Aorta (tissue), 5 donors: ENCODE measurements at regions of chr10 and their contacts with region 1.

Region 1: DNA sequence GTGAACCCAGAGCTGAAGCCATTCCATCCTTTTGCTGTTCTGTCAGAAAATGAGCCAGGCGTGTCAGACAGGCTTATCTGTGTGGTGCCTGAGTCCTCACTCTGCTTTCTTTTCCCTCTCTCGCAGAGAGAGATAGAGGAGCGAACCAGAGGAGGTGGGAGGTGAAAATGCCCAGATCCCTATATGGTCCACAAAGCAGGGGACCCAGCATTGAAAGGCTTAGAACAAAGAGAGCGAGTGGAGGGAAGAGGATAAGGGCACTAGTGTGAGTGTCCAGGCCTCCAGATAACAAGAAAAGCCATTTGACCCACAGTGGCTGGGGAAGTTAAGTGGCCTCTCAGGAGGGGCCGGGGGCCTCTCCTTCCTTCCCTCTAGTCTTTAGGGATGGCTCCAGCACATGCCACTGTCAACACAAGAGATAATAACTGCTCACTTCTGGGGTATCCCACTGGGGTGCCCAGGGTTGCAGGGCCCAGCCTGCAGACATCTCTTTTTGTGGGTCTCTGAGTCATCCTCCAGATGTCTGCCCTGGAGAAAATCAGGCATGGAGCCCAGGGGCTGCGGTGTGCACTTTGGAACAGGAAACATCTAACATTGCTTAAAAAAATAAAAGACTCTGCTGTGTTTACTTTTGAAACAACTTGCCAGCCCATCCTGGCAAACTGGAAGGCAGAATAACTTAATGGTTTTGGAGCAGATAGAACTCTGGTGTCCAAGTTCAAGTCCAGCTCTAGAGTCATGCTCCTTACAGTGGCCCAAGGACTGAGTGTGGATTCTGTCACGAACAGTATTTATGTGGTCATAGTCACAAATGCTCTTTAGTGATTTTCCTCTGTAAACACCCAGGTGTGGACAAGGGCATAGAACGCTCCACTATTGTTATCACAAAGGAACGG is 189.5 kb downstream of the CXCL12 start:
- DNase-seq: peak; percentile 87 to 90
- ATAC-seq: peak; percentile 82
- H3K4me3 ChIP-seq: no peak overlapping the region
- H3K27ac ChIP-seq: peak overlapping the region in 1 of 2 donors; percentile 32
- H3K4me1 ChIP-seq: no peaks in the 10 kb centered on the region
- H3K27me3 ChIP-seq: no peaks in the 10 kb centered on the region

Region 2: GRCh38 chr10:43808136-43808535 is 387.2 kb before region 1 on chr10:
- intact Hi-C with region 1: loop called in 1 of 2 experiments (anchors 5 kb)
- DNase-seq: no peak
- ATAC-seq: no peak
- H3K4me3 ChIP-seq: no peak overlapping the region
- H3K27ac ChIP-seq: peak overlapping the region; percentile 45 to 90
- H3K4me1 ChIP-seq: peaks cover 5% of the 10 kb centered on the region in 2 donors
- H3K27me3 ChIP-seq: no peaks in the 10 kb centered on the region

Region 3: GRCh38 chr10:44253769-44254462 is 58.6 kb after region 1 on chr10:
- intact Hi-C with region 1: loop called in 1 of 2 experiments (anchors 10 kb)
- DNase-seq: peak; percentile 79 to 87
- ATAC-seq: peak; percentile 82
- H3K4me3 ChIP-seq: no peak overlapping the region
- H3K27ac ChIP-seq: no peak overlapping the region
- H3K4me1 ChIP-seq: no peaks in the 10 kb centered on the region
- H3K27me3 ChIP-seq: no peaks in the 10 kb centered on the region